A549 (cell line): ENCODE measurements at regions of chr6 and their contacts with region 1.

Region 1: DNA sequence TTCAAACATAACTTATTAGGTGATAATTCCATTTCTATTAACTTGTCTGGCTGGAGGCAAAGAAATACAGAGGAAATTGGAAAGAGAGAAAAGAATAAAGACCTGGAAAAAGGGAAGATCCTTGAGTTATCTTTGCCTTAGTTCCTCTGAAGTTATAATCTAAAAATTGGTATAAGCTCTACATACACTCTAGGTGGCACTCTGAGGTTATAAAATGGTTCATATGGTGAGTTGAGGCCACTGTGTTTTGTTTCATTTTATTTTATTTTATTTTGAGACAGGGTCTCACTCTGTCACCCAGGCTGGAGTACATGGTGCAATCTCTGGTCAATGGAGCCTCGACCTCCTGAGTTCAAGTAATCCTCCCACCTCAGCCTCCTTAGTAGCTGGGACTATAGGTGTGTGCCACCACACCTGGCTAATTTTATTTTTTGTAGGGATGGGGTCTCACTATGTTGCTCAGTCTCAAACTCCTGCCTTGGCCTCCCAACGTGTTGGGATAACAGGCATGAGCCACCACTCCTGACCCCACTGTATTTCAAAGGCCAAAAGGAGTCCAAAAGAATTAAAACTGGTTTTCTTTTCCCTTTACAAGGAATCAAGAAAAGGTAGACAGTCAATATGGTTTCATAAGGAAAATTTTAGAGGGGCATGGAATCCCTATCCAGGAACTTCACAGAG is 19.4 kb downstream of the GPX6 start:
- DNase-seq: no peak
- ATAC-seq: 0 out of 6 replicates have a peak, but pooled peaks of 1 of the 2 experiments have one; percentile 36
- H3K4me3 ChIP-seq: no peak overlapping the region
- H3K27ac ChIP-seq: no peak overlapping the region
- H3K4me1 ChIP-seq: no peaks in the 10 kb centered on the region
- CTCF ChIP-seq: peak; percentile 43
- EP300 ChIP-seq: no peak
- POLR2A ChIP-seq: no peak
- RAD21 ChIP-seq: peak; percentile 59 to 61

Region 2: GRCh38 chr6:28408076-28408802 is 88.0 kb before region 1 on chr6:
- CTCF ChIA-PET with region 1: no interaction called
- POLR2A ChIA-PET with region 1: no interaction called
- DNase-seq: no peak
- ATAC-seq: no peak
- H3K4me3 ChIP-seq: no peak overlapping the region
- H3K27ac ChIP-seq: no peak overlapping the region
- H3K4me1 ChIP-seq: no peaks in the 10 kb centered on the region
- CTCF ChIP-seq: no peak
- EP300 ChIP-seq: no peak
- POLR2A ChIP-seq: no peak
- RAD21 ChIP-seq: no peak

Region 3: GRCh38 chr6:28585335-28585734 is 89.1 kb after region 1 on chr6:
- CTCF ChIA-PET with region 1: interaction called, 21 read pairs
- POLR2A ChIA-PET with region 1: no interaction called
- DNase-seq: no peak
- ATAC-seq: no peak
- H3K4me3 ChIP-seq: no peak overlapping the region
- H3K27ac ChIP-seq: no peak overlapping the region
- H3K4me1 ChIP-seq: peaks cover 30% of the 10 kb centered on the region
- CTCF ChIP-seq: no peak
- EP300 ChIP-seq: no peak
- POLR2A ChIP-seq: no peak
- RAD21 ChIP-seq: no peak

Region 4: DNA sequence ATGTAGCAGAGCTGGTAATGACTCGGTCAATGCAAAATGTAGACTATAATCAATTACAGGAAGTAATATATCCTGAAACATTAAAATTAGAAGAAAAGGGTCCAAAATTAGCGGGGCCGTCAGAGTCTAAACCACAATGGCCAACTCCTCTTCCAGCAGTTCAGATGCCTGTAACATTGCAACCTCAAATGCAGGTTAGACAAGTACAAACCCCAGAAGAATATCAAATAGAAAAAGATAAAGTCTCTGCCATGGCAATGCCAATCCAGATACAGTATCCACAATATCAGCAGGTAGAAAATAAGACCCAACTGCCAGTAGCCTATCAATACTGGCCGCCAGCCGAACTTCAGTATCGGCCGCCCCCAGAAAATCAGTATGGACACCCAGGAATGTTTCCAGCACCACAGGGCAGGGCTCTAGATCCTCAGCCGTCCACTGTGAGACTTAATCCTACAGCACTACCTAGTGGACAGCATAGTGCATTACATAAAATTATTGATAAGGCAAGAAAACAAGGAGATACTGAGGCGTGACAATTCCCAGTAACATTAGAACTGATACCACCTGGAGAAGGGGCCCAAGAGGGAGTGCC is 187.8 kb after region 1 on chr6:
- CTCF ChIA-PET with region 1: interaction called, 13 read pairs
- POLR2A ChIA-PET with region 1: no interaction called
- DNase-seq: peak; percentile 35 to 59
- ATAC-seq: peak; percentile 84 to 85
- H3K4me3 ChIP-seq: peak overlapping the region; percentile 19; the same call in 1 of the 3 replicates
- H3K27ac ChIP-seq: 0 out of 6 replicates have a peak overlapping the region, but pooled peaks of 1 of the 2 experiments have one; percentile 5
- H3K4me1 ChIP-seq: 0 out of 3 replicates have a peak, but pooled peaks cover 3% of the 10 kb centered on the region
- CTCF ChIP-seq: peak; percentile 69
- EP300 ChIP-seq: no peak
- POLR2A ChIP-seq: no peak
- RAD21 ChIP-seq: peak; percentile 82 to 92